PC-9 (cell line): ENCODE measurements at regions of chr19 and their contacts with region 1.

Region 1: DNA sequence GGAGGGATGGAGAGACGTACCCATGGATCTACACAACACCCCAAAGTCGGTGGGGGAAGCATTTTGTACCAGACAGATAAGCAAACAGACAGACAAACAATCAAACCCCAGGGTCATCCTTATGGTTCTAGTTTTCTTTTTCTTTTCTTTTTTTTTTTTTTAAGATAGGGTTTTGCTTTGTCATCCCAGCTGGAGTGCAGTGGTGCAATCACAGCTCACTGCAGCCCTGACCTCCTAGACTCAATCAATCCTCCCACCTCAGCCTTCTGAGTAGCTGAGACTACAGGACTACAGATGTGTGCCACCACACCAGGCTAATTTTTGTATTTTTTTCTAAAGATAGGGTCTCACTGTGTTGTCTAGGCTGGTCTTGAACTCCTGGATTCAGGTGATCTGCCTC is 17.9 kb upstream of the FBL start:
- DNase-seq: no peak
- H3K4me3 ChIP-seq: no peak overlapping the region
- H3K27ac ChIP-seq: no peak overlapping the region
- H3K4me1 ChIP-seq: no peaks in the 10 kb centered on the region
- H3K27me3 ChIP-seq: peaks cover 9% of the 10 kb centered on the region
- CTCF ChIP-seq: no peak

Region 2: DNA sequence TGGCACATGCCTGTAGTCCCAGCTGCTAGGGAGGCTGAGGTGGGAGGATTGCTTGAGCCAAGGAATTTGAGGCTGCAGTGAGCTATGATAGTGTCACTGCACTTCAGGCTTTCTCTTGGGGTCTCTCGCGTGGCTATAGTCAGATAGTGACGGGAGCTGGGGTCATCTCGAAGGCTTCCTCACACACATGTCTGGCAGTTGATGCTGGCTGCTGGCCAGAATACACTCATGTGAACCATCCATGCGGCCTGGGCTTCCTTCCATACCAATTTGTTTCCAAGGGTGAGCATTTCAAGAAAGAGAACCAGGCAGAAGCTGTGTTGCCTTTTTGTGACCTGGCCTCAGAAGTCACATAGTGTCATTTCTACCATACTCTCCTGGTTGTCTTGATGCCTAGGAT is 59.0 kb before region 1 on chr19:
- CTCF ChIA-PET with region 1: interaction called, 14 read pairs
- POLR2A ChIA-PET with region 1: no interaction called
- intact Hi-C with region 1: no loop called
- DNase-seq: no peak
- H3K4me3 ChIP-seq: no peak overlapping the region
- H3K27ac ChIP-seq: no peak overlapping the region
- H3K4me1 ChIP-seq: 0 out of 2 replicates have a peak, but pooled peaks cover 7% of the 10 kb centered on the region
- H3K27me3 ChIP-seq: peaks cover 6% of the 10 kb centered on the region; the same call in 1 of the 2 replicates
- CTCF ChIP-seq: no peak

Region 3: GRCh38 chr19:40081411-40081810 is 217.3 kb after region 1 on chr19:
- CTCF ChIA-PET with region 1: no interaction called
- POLR2A ChIA-PET with region 1: no interaction called
- intact Hi-C with region 1: no loop called
- DNase-seq: no peak
- H3K4me3 ChIP-seq: no peak overlapping the region
- H3K27ac ChIP-seq: no peak overlapping the region
- H3K4me1 ChIP-seq: no peaks in the 10 kb centered on the region
- H3K27me3 ChIP-seq: no peaks in the 10 kb centered on the region
- CTCF ChIP-seq: no peak